ENCODE measurements at regions of chr15 and their contacts with region 1.

Region 1: GRCh38 chr15:71252044-71252906 is 137.0 kb downstream of the THSD4 start:
- H3K4me3 ChIP-seq: no peak overlapping the region
- H3K27ac ChIP-seq: peak overlapping the region; percentile 56
- H3K4me1 ChIP-seq: peaks cover 24% of the 10 kb centered on the region
- CTCF ChIP-seq: no peak

Region 2: GRCh38 chr15:71103102-71103676 is 149.1 kb before region 1 on chr15:
- CTCF ChIA-PET with region 1: no interaction called
- POLR2A ChIA-PET with region 1: no interaction called
- H3K4me3 ChIP-seq: no peak overlapping the region
- H3K27ac ChIP-seq: no peak overlapping the region
- H3K4me1 ChIP-seq: no peaks in the 10 kb centered on the region
- CTCF ChIP-seq: peak; percentile 27; the same call in 1 of the 2 replicates

Region 3: DNA sequence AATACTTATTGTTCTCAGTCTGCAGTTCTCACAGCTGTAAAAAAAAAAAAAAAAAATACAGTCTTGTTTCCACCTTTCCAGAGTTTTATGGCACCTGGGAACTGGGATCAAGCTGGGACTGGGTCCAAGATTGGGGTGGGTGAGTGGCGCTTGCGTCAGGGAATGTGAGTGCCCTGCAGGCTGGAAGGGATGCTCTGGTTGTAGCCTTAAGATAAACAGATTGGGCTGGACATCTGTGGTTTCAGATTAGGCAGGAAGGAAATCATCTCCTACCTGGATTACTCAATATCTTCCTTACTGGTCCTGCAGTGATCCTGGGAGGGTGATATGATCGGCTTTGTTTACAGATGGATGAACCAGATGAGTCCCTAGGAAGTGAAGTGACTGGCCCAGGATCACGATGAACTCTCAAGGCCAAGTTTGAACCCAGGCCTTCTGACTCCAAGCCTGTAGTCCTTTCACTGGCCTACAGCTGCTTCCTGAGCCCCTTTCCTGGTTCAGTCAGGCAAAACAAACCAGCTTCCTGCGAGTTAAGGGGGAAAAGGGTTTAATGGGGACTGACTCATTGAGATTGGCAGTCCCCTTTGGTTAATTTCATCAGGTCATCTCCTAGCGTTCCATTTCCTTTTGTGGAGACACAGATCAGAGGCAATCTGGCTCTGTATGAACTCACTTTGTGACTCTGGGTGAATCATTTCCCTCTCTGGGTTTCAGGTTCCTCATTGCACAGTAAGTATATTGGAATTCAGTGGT is 42.8 kb after region 1 on chr15:
- CTCF ChIA-PET with region 1: no interaction called
- POLR2A ChIA-PET with region 1: interaction called, 13 read pairs
- H3K4me3 ChIP-seq: no peak overlapping the region
- H3K27ac ChIP-seq: peak overlapping the region; percentile 47
- H3K4me1 ChIP-seq: peaks cover 24% of the 10 kb centered on the region
- CTCF ChIP-seq: no peak

Measured in HEK293 (cell line).